ENCODE measurements at regions of chr6 and their contacts with region 1.

Region 1: DNA sequence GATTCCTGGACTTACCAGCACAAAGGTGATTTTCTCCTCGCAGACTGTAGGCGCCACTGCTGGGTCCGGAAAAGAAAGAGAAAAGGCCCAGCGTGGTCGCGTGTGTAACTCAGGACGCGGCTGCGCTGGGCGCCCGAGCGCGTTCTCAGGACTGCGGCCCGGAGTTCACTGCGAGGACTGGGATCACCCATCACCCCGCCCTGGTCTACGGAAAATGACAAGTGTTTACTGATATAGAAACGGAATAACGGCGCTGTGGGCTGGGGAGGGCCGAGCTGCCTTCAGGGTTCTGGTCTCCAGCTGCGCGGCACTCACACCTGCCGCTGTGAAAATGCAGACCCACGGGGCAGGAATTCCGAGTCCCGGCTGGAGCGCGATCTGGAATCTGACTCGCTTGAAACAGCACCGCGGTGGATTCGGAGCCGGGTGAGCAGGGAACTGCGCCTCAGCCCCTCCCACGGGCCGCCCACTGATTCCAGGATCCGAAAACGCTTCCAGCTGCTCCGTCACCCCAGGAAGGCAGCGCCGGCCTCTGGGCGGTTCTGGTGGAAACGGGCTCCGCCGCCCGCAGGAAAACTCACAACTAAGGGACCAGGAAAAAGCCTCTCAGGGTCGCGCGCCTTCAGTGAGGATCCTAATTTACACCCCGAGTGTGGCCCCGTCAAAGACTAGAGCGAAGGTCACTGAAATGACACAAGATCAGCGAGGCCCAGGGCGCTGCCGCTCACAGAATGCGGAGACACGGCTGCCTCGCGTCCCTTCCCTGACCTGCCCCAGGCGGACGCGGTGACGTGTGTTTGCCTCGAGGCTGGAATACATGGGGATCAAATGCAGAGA is 34.5 kb downstream of the HLA-A start:
- DNase-seq: peak; percentile 61 to 77
- ATAC-seq: peak; percentile 89 to 91
- H3K4me3 ChIP-seq: peak overlapping the region; percentile 58 to 80 (median 71)
- H3K27ac ChIP-seq: peak overlapping the region; percentile 88 to 97 (median 92)
- H3K4me1 ChIP-seq: peaks cover 7 to 19% of the 10 kb centered on the region in 2 donors
- H3K27me3 ChIP-seq: no peaks in the 10 kb centered on the region
- CTCF ChIP-seq: peak; percentile 4 to 37 (median 27)
- POLR2A ChIP-seq: peak; percentile 35 to 71

Region 2: GRCh38 chr6:29887819-29888776 is 88.7 kb before region 1 on chr6:
- in situ Hi-C with region 1: no loop called
- intact Hi-C with region 1: loop called (anchors 2 kb)
- DNase-seq: peak; percentile 22 to 66
- ATAC-seq: peak; percentile 83 to 92
- H3K4me3 ChIP-seq: peak overlapping the region in 3 of 4 donors; percentile 52 to 91 (median 59)
- H3K27ac ChIP-seq: peak overlapping the region in 3 of 4 donors; percentile 71 to 85 (median 75)
- H3K4me1 ChIP-seq: peaks cover 0 to 5% of the 10 kb centered on the region in 2 donors
- H3K27me3 ChIP-seq: peaks cover 0 to 12% (median 0%) of the 10 kb centered on the region in 3 donors
- CTCF ChIP-seq: no peak
- POLR2A ChIP-seq: no peak

Region 3: GRCh38 chr6:29942275-29943052 is 34.3 kb before region 1 on chr6 and contains the start of gene HLA-A:
- in situ Hi-C with region 1: no loop called
- intact Hi-C with region 1: loop called (anchors 2 kb)
- DNase-seq: peak; percentile 91 to 94
- ATAC-seq: peak; percentile 98 to 99
- H3K4me3 ChIP-seq: peak within 1 kb of the TSS; percentile 61 to 80 (median 66)
- H3K27ac ChIP-seq: peak within 1 kb of the TSS; percentile 81 to 88 (median 86)
- H3K4me1 ChIP-seq: peaks cover 0 to 5% of the 10 kb centered on the region in 2 donors
- H3K27me3 ChIP-seq: no peaks in the 10 kb centered on the region
- CTCF ChIP-seq: no peak
- POLR2A ChIP-seq: peak; percentile 76 to 90
- total RNA-seq, gene HLA-A: 149 to 161 (median 154) TPM

Measured in gastrocnemius medialis (tissue), 4 donors.